ENCODE measurements at regions of chr5 and their contacts with region 1.

Region 1: GRCh38 chr5:150357326-150358260 is at the start of gene TCOF1:
- DNase-seq: peak; percentile 94 to 98 (median 97)
- ATAC-seq: peak; percentile 100
- H3K4me3 ChIP-seq: peak within 1 kb of the TSS; percentile 62
- H3K4me3 Mint-ChIP-seq: peak within 1 kb of the TSS; percentile 85 to 95 (median 91)
- H3K27ac ChIP-seq: peak within 1 kb of the TSS; percentile 81
- H3K27ac Mint-ChIP-seq: peak within 1 kb of the TSS; percentile 87 to 97 (median 96)
- H3K4me1 ChIP-seq: peaks cover 23 to 24% of the 10 kb centered on the region in 2 donors
- H3K4me1 Mint-ChIP-seq: peaks cover 35 to 54% (median 48%) of the 10 kb centered on the region in 7 donors
- H3K27me3 ChIP-seq: no peaks in the 10 kb centered on the region
- H3K27me3 Mint-ChIP-seq: peaks cover 0 to 2% (median 0%) of the 10 kb centered on the region in 5 donors
- total RNA-seq, gene TCOF1: 45.9 to 60.0 (median 54.6) TPM

Region 2: GRCh38 chr5:149099920-149100319 is 1257.7 kb before region 1 on chr5:
- CTCF ChIA-PET with region 1: no interaction called
- POLR2A ChIA-PET with region 1: no interaction called
- intact Hi-C with region 1: no loop called
- DNase-seq: no peak
- ATAC-seq: no peak
- H3K4me3 ChIP-seq: no peak overlapping the region
- H3K4me3 Mint-ChIP-seq: no peak overlapping the region
- H3K27ac ChIP-seq: no peak overlapping the region
- H3K27ac Mint-ChIP-seq: no peak overlapping the region
- H3K4me1 ChIP-seq: no peaks in the 10 kb centered on the region
- H3K4me1 Mint-ChIP-seq: peaks cover 0 to 4% (median 0%) of the 10 kb centered on the region in 7 donors
- H3K27me3 ChIP-seq: no peaks in the 10 kb centered on the region
- H3K27me3 Mint-ChIP-seq: peaks cover 0 to 17% (median 12%) of the 10 kb centered on the region in 5 donors

Region 3: GRCh38 chr5:149357370-149358293 is 1000.0 kb before region 1 on chr5 and contains the start of gene PCYOX1L:
- CTCF ChIA-PET with region 1: no interaction called
- POLR2A ChIA-PET with region 1: no interaction called
- intact Hi-C with region 1: loop called in 1 of 2 experiments (anchors 5 kb)
- DNase-seq: peak; percentile 88 to 98 (median 94)
- ATAC-seq: peak; percentile 99
- H3K4me3 ChIP-seq: peak within 1 kb of the TSS; percentile 80
- H3K4me3 Mint-ChIP-seq: peak within 1 kb of the TSS; percentile 80 to 99 (median 94)
- H3K27ac ChIP-seq: peak within 1 kb of the TSS; percentile 83
- H3K27ac Mint-ChIP-seq: peak within 1 kb of the TSS; percentile 83 to 96 (median 92)
- H3K4me1 ChIP-seq: peaks cover 15 to 36% of the 10 kb centered on the region in 2 donors
- H3K4me1 Mint-ChIP-seq: peaks cover 41 to 82% (median 65%) of the 10 kb centered on the region in 7 donors
- H3K27me3 ChIP-seq: no peaks in the 10 kb centered on the region
- H3K27me3 Mint-ChIP-seq: no peaks in the 10 kb centered on the region
- total RNA-seq, gene PCYOX1L: 29.7 to 53.7 (median 36.3) TPM

Region 4: GRCh38 chr5:150000256-150000989 is 357.2 kb before region 1 on chr5 and contains the starts of genes HMGXB3 and TIGD6:
- CTCF ChIA-PET with region 1: no interaction called
- POLR2A ChIA-PET with region 1: no interaction called
- intact Hi-C with region 1: loop called (anchors 1 kb)
- DNase-seq: peak; percentile 64 to 87 (median 74)
- ATAC-seq: peak; percentile 83
- H3K4me3 ChIP-seq: peak within 1 kb of the TSS; percentile 76
- H3K4me3 Mint-ChIP-seq: peak within 1 kb of the TSS; percentile 86 to 99 (median 93)
- H3K27ac ChIP-seq: peak within 1 kb of the TSS; percentile 80
- H3K27ac Mint-ChIP-seq: peak within 1 kb of the TSS; percentile 75 to 98 (median 94)
- H3K4me1 ChIP-seq: peaks cover 18 to 23% of the 10 kb centered on the region in 2 donors
- H3K4me1 Mint-ChIP-seq: peaks cover 33 to 55% (median 46%) of the 10 kb centered on the region in 7 donors
- H3K27me3 ChIP-seq: no peaks in the 10 kb centered on the region
- H3K27me3 Mint-ChIP-seq: no peaks in the 10 kb centered on the region
- total RNA-seq, gene HMGXB3: 27.2 to 40.6 (median 34.5) TPM
- total RNA-seq, gene TIGD6: 2.3 to 7.4 (median 2.8) TPM

Region 5: GRCh38 chr5:150258130-150258529 is 99.5 kb before region 1 on chr5:
- CTCF ChIA-PET with region 1: no interaction called
- POLR2A ChIA-PET with region 1: no interaction called
- intact Hi-C with region 1: no loop called
- DNase-seq: no peak
- ATAC-seq: no peak
- H3K4me3 ChIP-seq: no peak overlapping the region
- H3K4me3 Mint-ChIP-seq: no peak overlapping the region
- H3K27ac ChIP-seq: no peak overlapping the region
- H3K27ac Mint-ChIP-seq: peak overlapping the region in 1 of 9 donors; percentile 48
- H3K4me1 ChIP-seq: no peaks in the 10 kb centered on the region
- H3K4me1 Mint-ChIP-seq: no peaks in the 10 kb centered on the region
- H3K27me3 ChIP-seq: no peaks in the 10 kb centered on the region
- H3K27me3 Mint-ChIP-seq: no peaks in the 10 kb centered on the region

Region 6: DNA sequence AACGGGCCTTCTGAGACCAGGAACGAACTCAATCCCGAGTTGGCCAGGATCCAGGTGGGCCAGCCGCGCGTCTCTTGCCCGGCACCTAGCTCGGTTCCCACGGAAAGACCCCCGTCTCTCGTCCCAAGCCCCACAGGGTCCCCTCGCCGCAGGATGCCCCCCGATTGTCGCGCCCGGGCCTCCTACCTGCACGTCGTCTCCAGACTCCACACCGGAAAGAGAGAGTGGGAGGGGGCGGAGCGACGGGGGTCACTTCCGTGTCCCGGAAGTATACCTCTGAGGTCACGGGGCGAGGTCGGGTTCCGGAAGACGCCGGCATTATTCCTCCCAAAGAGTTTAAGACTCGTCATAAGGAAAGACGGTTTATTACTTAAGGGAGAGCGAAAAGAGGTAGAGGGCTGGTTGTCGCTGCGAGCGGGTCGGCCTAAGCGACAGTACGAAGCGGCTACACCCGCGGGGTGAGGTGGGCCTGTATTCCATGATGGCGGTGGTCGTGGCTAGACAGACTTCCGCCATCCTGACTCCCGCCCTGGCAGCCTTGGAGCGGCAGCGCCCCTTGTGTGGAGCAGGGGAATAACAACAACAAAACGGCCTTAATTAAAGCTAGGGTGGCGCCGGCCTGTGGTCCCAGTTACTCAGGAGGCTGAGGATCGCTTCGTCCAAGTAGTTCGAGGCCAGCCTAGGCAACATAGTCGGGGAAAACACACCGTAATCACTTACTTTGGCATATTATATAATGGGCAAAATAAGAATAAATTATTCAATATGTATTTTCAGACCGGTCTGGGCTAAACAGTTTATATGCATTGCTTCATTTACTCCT is 92.1 kb after region 1 on chr5 and contains the start of gene RPS14:
- CTCF ChIA-PET with region 1: no interaction called
- POLR2A ChIA-PET with region 1: interaction called, 9 read pairs
- intact Hi-C with region 1: loop called (anchors 1 kb)
- DNase-seq: peak; percentile 89 to 98 (median 97)
- ATAC-seq: peak; percentile 97
- H3K4me3 ChIP-seq: peak within 1 kb of the TSS; percentile 68
- H3K4me3 Mint-ChIP-seq: peak within 1 kb of the TSS; percentile 89 to 100 (median 96)
- H3K27ac ChIP-seq: peak within 1 kb of the TSS; percentile 100
- H3K27ac Mint-ChIP-seq: peak within 1 kb of the TSS; percentile 97 to 100 (median 100)
- H3K4me1 ChIP-seq: peaks cover 18 to 23% of the 10 kb centered on the region in 2 donors
- H3K4me1 Mint-ChIP-seq: peaks cover 21 to 44% (median 37%) of the 10 kb centered on the region in 7 donors
- H3K27me3 ChIP-seq: no peaks in the 10 kb centered on the region
- H3K27me3 Mint-ChIP-seq: no peaks in the 10 kb centered on the region
- total RNA-seq, gene RPS14: 2,331 to 7,378 (median 6,414) TPM

Region 7: GRCh38 chr5:151157426-151158286 is 800.1 kb after region 1 on chr5 and contains the start of gene ANXA6:
- CTCF ChIA-PET with region 1: no interaction called
- POLR2A ChIA-PET with region 1: no interaction called
- intact Hi-C with region 1: loop called in 1 of 2 experiments (anchors 1 kb)
- DNase-seq: peak; percentile 48 to 79 (median 57)
- ATAC-seq: peak; percentile 92
- H3K4me3 ChIP-seq: peak within 1 kb of the TSS; percentile 85
- H3K4me3 Mint-ChIP-seq: peak within 1 kb of the TSS; percentile 94 to 99 (median 96)
- H3K27ac ChIP-seq: peak within 1 kb of the TSS; percentile 92
- H3K27ac Mint-ChIP-seq: peak within 1 kb of the TSS; percentile 90 to 99 (median 96)
- H3K4me1 ChIP-seq: peaks cover 36 to 44% of the 10 kb centered on the region in 2 donors
- H3K4me1 Mint-ChIP-seq: peaks cover 39 to 69% (median 57%) of the 10 kb centered on the region in 7 donors
- H3K27me3 ChIP-seq: no peaks in the 10 kb centered on the region
- H3K27me3 Mint-ChIP-seq: no peaks in the 10 kb centered on the region
- total RNA-seq, gene ANXA6: 212 to 512 (median 272) TPM